Transverse colon (tissue), 4 donors: ENCODE measurements at regions of chr16 and their contacts with region 1.

Region 1: DNA sequence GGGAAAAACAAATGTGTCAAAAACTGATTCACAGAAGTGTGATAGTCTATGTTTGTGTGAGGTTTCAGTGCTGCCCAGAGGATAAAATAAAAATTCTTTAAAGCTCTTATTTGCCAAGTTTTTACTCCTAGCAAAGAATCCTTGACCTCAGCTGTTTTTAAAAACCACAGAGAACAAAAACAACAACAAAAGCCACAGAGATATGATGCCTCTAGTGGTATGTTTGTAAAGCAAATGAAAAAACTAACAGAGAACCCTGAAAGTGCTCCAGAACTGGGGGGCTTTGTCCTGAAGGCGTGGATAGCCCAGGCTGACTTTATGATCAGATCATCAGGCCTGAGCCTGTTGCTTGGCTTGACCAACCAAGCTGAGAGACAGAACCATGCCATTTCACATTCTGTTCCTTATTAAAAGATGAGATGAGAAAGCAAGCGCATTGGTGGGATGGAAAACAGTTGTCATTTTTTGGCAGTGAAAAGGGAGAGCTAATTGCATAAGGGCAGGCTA is 411.0 kb downstream of the CPPED1 start:
- DNase-seq: peak; percentile 10
- H3K4me3 ChIP-seq: no peak overlapping the region
- H3K27ac ChIP-seq: peak overlapping the region in 1 of 4 donors; percentile 28
- H3K4me1 ChIP-seq: no peaks in the 10 kb centered on the region
- H3K27me3 ChIP-seq: no peaks in the 10 kb centered on the region
- CTCF ChIP-seq: no peak
- EP300 ChIP-seq: no peak
- POLR2A ChIP-seq: no peak

Region 2: GRCh38 chr16:12362482-12363458 is 29.9 kb before region 1 on chr16:
- in situ Hi-C with region 1: no loop called
- intact Hi-C with region 1: no loop called
- DNase-seq: no peak
- H3K4me3 ChIP-seq: no peak overlapping the region
- H3K27ac ChIP-seq: peak overlapping the region in 2 of 4 donors; percentile 8 to 9
- H3K4me1 ChIP-seq: peaks cover 0 to 5% (median 0%) of the 10 kb centered on the region in 4 donors
- H3K27me3 ChIP-seq: no peaks in the 10 kb centered on the region
- CTCF ChIP-seq: no peak
- EP300 ChIP-seq: no peak
- POLR2A ChIP-seq: no peak

Region 3: DNA sequence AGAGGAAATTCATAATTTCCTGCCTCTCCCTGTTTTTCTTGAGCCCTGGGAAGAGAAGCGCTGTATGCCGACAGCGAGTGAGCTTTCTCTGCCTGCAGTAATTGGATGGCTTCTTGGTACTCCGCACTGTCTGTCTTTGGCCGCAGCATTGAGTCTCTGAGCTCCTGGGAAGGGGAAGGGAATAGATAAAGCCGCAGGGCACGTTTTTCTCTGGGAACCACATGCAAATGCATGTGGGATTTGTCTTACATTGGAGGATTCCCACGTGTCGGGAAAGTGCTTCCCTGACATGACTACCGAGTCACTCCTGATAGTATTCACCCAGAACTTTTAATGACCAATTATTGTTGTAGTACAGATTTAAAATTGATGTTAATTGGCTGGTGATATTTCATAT is 25.2 kb after region 1 on chr16:
- in situ Hi-C with region 1: no loop called
- intact Hi-C with region 1: loop called (anchors 1 kb)
- DNase-seq: no peak
- H3K4me3 ChIP-seq: no peak overlapping the region
- H3K27ac ChIP-seq: no peak overlapping the region
- H3K4me1 ChIP-seq: no peaks in the 10 kb centered on the region
- H3K27me3 ChIP-seq: no peaks in the 10 kb centered on the region
- CTCF ChIP-seq: no peak
- EP300 ChIP-seq: no peak
- POLR2A ChIP-seq: no peak